Calu3 (cell line): ENCODE measurements at regions of chr3 and their contacts with region 1.

Region 1: DNA sequence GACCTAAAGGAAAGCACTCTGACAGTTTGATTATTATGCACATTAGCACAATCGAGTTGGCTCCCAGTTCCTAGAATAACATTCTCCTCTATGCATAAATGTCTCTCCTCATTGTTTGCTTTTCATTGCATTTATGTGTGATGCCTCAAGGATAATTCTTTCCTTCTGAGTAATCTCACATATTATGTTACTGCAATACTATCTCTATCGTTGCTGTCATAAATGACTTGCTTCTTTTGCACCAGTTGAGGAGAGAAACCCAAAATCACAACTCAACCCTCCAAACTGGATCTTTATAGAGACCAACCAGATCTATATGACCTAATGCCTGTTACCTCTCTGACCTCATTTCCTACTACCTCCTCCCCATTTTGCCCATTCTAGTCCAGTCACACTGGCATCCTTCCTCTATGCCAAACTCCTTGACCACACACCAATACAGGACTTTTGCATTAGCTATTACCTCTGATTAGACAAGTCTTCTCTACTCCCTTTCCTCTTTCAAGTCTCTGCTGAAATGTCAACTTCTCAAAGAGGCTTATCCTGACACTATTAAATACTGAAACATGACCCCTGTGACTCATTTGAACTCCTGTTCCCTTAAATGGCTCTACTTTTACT is 1026.0 kb downstream of the TUSC7 start:
- DNase-seq: no peak
- H3K4me3 Mint-ChIP-seq: no peak overlapping the region
- H3K27ac Mint-ChIP-seq: no peak overlapping the region
- H3K4me1 Mint-ChIP-seq: peaks cover 34% of the 10 kb centered on the region
- H3K27me3 Mint-ChIP-seq: no peaks in the 10 kb centered on the region
- CTCF ChIP-seq: no peak

Region 2: DNA sequence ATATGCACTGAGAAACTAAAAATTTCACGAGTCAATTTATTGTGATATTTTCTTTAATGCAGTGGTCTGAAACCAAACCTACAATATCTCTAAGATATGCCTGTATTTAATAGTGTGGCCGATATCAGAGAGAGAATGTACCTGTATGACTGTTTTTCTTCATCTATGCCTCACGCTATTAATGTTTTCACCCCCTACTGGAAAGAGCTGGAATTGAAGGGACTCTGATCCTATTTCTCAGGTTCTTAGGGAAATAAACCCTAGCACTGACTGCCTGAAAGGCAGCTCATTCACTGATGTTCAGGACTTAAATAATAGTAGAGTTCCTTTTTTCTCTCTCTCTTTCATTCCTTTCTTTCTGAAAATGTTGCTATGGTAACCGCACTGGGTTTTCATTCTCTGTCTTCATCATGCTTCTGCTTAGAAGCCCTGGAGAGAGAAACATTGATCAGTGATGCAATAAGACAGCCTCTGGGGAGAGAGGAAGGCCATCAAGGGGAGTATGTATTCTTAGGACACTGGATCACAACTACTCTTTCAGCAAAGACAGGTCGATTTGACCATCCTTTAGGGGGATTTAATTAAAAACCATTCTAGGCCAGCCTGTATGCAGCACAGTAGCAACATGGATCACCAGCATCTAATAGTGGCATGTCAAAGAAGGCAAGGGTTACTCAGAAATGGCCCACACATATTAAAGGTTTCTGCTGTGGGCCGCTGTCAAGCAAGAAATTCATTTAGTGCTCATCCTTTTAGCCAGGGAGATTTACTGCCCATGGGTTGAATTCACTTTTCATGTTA is 163.3 kb after region 1 on chr3:
- CTCF ChIA-PET with region 1: no interaction called
- intact Hi-C with region 1: loop called (anchors 10 kb)
- DNase-seq: peak; percentile 11
- H3K4me3 Mint-ChIP-seq: no peak overlapping the region
- H3K27ac Mint-ChIP-seq: no peak overlapping the region
- H3K4me1 Mint-ChIP-seq: no peaks in the 10 kb centered on the region
- H3K27me3 Mint-ChIP-seq: no peaks in the 10 kb centered on the region
- CTCF ChIP-seq: peak; percentile 36

Region 3: GRCh38 chr3:117997201-117998049 is 261.8 kb after region 1 on chr3:
- CTCF ChIA-PET with region 1: no interaction called
- intact Hi-C with region 1: loop called (anchors 10 kb)
- DNase-seq: peak; percentile 45
- H3K4me3 Mint-ChIP-seq: no peak overlapping the region
- H3K27ac Mint-ChIP-seq: no peak overlapping the region
- H3K4me1 Mint-ChIP-seq: no peaks in the 10 kb centered on the region
- H3K27me3 Mint-ChIP-seq: no peaks in the 10 kb centered on the region
- CTCF ChIP-seq: peak; percentile 46